ENCODE measurements at regions of chr3 and their contacts with region 1.

Region 1: GRCh38 chr3:49539659-49540560 is 14.4 kb upstream of the BSN start:
- DNase-seq: peak; percentile 85 to 90 (median 86)
- H3K4me3 ChIP-seq: peak overlapping the region; percentile 61 to 64
- H3K4me3 Mint-ChIP-seq: peak overlapping the region; percentile 71 to 87 (median 82)
- H3K27ac ChIP-seq: peak overlapping the region; percentile 64
- H3K27ac Mint-ChIP-seq: peak overlapping the region in 6 of 7 donors; percentile 48 to 83 (median 56)
- H3K4me1 ChIP-seq: peaks cover 11% of the 10 kb centered on the region
- H3K4me1 Mint-ChIP-seq: peaks cover 2 to 8% (median 4%) of the 10 kb centered on the region in 4 donors
- H3K27me3 ChIP-seq: no peaks in the 10 kb centered on the region
- H3K27me3 Mint-ChIP-seq: peaks cover 4 to 5% of the 10 kb centered on the region in 2 donors

Region 2: GRCh38 chr3:49295489-49296058 is 244.3 kb before region 1 on chr3:
- CTCF ChIA-PET with region 1: no interaction called
- POLR2A ChIA-PET with region 1: no interaction called
- intact Hi-C with region 1: no loop called
- DNase-seq: peak in 4 of 5 donors; percentile 28 to 45 (median 37)
- H3K4me3 ChIP-seq: no peak overlapping the region
- H3K4me3 Mint-ChIP-seq: peak overlapping the region in 2 of 8 donors; percentile 4 to 71
- H3K27ac ChIP-seq: no peak overlapping the region
- H3K27ac Mint-ChIP-seq: peak overlapping the region in 4 of 7 donors; percentile 3 to 74 (median 32)
- H3K4me1 ChIP-seq: no peaks in the 10 kb centered on the region
- H3K4me1 Mint-ChIP-seq: peaks cover 0 to 6% (median 1%) of the 10 kb centered on the region in 4 donors
- H3K27me3 ChIP-seq: no peaks in the 10 kb centered on the region
- H3K27me3 Mint-ChIP-seq: no peaks in the 10 kb centered on the region

Region 3: DNA sequence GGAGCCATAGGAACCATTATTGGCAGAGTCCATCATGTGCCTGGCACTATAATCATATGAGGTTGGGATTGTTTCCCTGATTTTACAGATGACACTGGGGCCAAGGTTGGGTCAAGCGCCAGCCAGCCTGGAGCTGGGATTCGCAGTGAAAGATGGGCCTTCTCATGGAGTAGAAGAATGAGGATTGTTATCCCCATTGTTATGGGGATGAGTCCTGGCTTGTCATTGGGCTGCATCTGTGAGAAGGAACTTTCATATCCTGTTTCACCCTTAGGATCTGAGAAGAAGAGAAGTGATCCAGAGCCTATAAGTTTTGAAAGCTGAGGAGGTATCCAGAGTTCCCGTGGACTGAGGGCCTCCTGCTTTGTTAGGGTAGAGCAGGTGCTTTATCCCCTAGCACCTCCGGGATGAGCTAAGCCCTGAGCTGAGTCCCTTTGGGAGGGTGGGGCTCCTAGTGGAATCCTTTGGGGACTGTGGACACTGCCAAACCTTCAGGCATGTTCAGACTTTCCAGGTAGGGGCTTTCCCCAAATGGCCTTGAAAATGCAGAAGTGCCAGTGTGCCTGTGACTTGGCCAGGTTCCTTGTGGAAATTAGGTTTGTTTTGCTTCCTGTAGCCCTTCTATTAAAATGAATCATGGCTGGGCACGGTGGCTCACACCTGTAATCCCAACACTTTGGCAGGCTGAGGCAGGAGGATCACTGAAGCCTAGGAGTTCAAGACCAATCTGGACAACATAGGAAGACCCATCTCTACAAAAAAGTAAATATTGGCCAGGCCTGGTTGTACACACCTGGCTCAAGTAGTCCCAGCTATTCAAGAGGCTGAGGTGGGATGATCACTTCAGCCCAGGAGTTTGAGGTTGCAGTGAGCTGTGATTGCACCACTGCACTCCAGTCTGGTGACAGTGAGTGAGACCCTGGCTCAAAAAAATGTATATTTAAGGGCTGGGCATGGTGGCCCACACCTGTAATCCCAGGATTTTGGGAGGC is 15.9 kb before region 1 on chr3:
- CTCF ChIA-PET with region 1: interaction called, 10 read pairs
- POLR2A ChIA-PET with region 1: no interaction called
- intact Hi-C with region 1: no loop called
- DNase-seq: no peak
- H3K4me3 ChIP-seq: no peak overlapping the region
- H3K4me3 Mint-ChIP-seq: no peak overlapping the region
- H3K27ac ChIP-seq: no peak overlapping the region
- H3K27ac Mint-ChIP-seq: peak overlapping the region in 2 of 7 donors; percentile 41 to 64
- H3K4me1 ChIP-seq: no peaks in the 10 kb centered on the region
- H3K4me1 Mint-ChIP-seq: peaks cover 5 to 15% (median 7%) of the 10 kb centered on the region in 4 donors
- H3K27me3 ChIP-seq: no peaks in the 10 kb centered on the region
- H3K27me3 Mint-ChIP-seq: no peaks in the 10 kb centered on the region

Region 4: DNA sequence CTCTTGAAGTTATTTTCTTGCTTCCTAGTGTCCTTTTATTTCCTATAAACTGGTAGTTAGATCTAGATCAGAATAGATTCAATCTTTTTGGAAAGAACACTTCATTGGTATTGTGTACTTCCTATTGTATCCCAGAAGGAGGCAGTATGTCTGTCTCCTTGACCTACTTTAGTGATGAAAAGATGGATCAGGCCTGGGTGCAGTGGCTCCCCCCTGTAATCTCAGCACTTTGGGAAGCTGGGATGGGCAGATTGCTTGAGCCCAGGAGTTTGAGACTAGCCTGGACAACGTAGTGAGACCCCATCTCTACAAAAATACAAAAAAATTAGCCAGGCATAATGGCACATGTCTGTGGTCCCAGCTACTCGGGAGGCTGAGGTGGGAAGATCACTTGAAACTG is 26.4 kb after region 1 on chr3:
- CTCF ChIA-PET with region 1: interaction called, 12 read pairs
- POLR2A ChIA-PET with region 1: no interaction called
- intact Hi-C with region 1: no loop called
- DNase-seq: no peak
- H3K4me3 ChIP-seq: no peak overlapping the region
- H3K4me3 Mint-ChIP-seq: no peak overlapping the region
- H3K27ac ChIP-seq: no peak overlapping the region
- H3K27ac Mint-ChIP-seq: no peak overlapping the region
- H3K4me1 ChIP-seq: no peaks in the 10 kb centered on the region
- H3K4me1 Mint-ChIP-seq: no peaks in the 10 kb centered on the region
- H3K27me3 ChIP-seq: no peaks in the 10 kb centered on the region
- H3K27me3 Mint-ChIP-seq: peaks cover 0 to 10% of the 10 kb centered on the region in 2 donors

Region 5: GRCh38 chr3:49652903-49653415 is 113.0 kb after region 1 on chr3:
- CTCF ChIA-PET with region 1: interaction called, 10 read pairs
- POLR2A ChIA-PET with region 1: no interaction called
- intact Hi-C with region 1: no loop called
- DNase-seq: no peak
- H3K4me3 ChIP-seq: no peak overlapping the region
- H3K4me3 Mint-ChIP-seq: no peak overlapping the region
- H3K27ac ChIP-seq: no peak overlapping the region
- H3K27ac Mint-ChIP-seq: no peak overlapping the region
- H3K4me1 ChIP-seq: no peaks in the 10 kb centered on the region
- H3K4me1 Mint-ChIP-seq: no peaks in the 10 kb centered on the region
- H3K27me3 ChIP-seq: no peaks in the 10 kb centered on the region
- H3K27me3 Mint-ChIP-seq: peaks cover 0 to 3% of the 10 kb centered on the region in 2 donors

Region 6: DNA sequence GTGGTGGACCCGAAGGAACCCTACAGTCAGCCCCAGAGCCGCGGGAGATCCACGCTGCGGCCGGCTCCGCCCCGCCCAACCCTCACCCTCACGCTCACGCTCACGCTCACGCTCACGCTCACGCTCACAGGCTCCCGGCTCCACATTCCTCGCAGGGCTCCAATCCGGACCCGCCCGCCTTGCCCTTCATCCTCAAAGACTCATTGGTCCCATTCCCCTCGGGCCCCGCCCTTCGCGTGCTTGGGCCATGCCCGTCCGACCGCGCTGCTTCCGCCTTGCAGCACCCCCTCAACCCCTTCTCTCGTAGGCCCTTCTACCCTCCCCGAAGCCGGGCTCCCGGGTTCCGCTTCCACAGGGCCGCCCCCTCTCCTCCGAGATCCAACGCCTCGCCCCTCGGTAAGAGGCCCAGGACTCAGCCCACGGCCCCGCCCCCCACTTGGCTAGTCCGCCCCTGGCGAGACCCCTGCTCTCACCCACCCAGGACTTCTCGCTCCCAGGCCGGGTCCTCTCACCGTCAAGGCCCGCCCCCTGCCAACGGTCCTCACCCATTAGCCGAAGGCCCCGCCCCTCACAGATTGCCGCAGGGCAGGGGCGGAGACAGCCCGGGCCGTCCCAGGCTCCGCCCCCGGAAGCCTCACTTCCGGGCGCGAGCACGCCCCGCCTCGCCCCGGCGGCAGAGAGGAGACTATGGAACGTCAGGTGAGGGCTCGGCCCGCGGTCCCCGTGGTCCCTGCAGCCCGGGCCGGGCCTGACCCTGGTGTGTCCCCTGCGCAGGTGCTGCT is 134.0 kb after region 1 on chr3 and contains the start of gene APEH:
- CTCF ChIA-PET with region 1: interaction called, 319 read pairs
- POLR2A ChIA-PET with region 1: interaction called, 85 read pairs
- intact Hi-C with region 1: no loop called
- DNase-seq: peak; percentile 98 to 99 (median 98)
- H3K4me3 ChIP-seq: peak within 1 kb of the TSS; percentile 48 to 75
- H3K4me3 Mint-ChIP-seq: peak within 1 kb of the TSS; percentile 90 to 99 (median 94)
- H3K27ac ChIP-seq: peak within 1 kb of the TSS; percentile 77
- H3K27ac Mint-ChIP-seq: peak within 1 kb of the TSS; percentile 97 to 99 (median 98)
- H3K4me1 ChIP-seq: peaks cover 32% of the 10 kb centered on the region
- H3K4me1 Mint-ChIP-seq: peaks cover 20 to 50% (median 34%) of the 10 kb centered on the region in 4 donors
- H3K27me3 ChIP-seq: no peaks in the 10 kb centered on the region
- H3K27me3 Mint-ChIP-seq: no peaks in the 10 kb centered on the region
- total RNA-seq, gene APEH: 130 to 136 TPM